Tibial artery (tissue), 4 donors: ENCODE measurements at regions of chr10 and their contacts with region 1.

Region 1: DNA sequence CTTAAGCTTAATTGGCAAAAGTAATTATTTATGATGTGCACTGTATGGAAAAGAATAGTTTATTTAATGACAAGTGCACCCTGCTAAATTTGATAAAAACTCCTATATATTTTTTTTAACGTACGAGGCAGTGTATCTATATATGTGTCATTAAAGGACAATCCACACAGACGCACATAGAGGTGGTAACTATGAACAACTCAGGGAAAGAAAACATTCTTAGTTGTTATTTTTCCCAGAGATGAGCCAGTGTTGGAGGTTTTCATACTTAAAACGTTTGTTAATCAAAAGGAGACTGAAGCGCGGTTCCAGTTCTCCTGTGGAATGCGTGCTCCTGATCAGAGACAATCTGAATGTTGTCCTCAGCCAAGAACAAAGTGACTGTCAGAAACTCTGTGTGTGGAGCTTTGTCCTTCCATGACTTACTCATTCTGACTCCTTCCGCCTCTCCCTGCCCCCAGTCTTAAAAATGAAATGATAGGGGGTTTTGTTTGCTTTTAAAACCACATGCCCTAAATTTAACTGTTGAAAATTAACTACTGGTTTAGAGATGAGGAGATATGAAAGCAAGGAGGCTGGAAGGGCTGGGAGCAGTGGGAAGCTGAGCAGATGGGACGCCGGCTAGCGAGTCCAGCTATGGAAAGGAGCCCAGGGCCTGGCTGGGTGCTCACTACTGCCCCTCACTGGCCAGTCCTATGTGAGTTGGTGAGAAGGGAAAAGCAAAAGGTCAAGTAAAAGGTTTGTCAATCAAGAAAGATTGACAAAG is 99.6 kb downstream of the SVIL start:
- DNase-seq: no peak
- H3K4me3 ChIP-seq: peak overlapping the region in 1 of 2 donors; percentile 12
- H3K27ac ChIP-seq: peak overlapping the region; percentile 56 to 68
- H3K4me1 ChIP-seq: peaks cover 5 to 49% (median 19%) of the 10 kb centered on the region in 4 donors
- H3K27me3 ChIP-seq: no peaks in the 10 kb centered on the region
- CTCF ChIP-seq: peak; percentile 49 to 51

Region 2: DNA sequence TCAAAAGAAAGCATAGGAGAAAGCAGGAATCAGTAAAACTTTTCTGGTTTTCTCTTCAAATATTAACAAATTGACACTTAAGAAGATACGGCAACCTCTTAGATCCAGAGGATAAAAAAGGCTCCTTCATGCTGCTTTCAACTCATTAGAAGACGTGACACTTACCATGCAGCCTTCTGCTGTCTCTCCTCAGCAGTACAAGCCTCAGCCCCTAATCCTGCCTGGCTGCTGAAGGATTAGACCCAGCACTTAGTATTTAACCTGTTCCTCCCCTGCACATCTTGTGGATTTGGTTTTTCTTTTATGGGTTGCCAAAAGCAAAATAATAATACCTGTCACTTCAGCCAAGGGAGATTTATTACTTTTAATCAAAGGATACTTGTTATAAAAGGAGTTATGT is 138.0 kb before region 1 on chr10:
- intact Hi-C with region 1: no loop called
- DNase-seq: no peak
- H3K4me3 ChIP-seq: no peak overlapping the region
- H3K27ac ChIP-seq: no peak overlapping the region
- H3K4me1 ChIP-seq: no peaks in the 10 kb centered on the region
- H3K27me3 ChIP-seq: peaks cover 0 to 7% of the 10 kb centered on the region in 2 donors
- CTCF ChIP-seq: no peak

Region 3: GRCh38 chr10:29585488-29585980 is 50.3 kb after region 1 on chr10:
- intact Hi-C with region 1: loop called (anchors 10 kb)
- DNase-seq: no peak
- H3K4me3 ChIP-seq: no peak overlapping the region
- H3K27ac ChIP-seq: peak overlapping the region; percentile 47 to 69
- H3K4me1 ChIP-seq: peaks cover 5 to 97% (median 46%) of the 10 kb centered on the region in 4 donors
- H3K27me3 ChIP-seq: no peaks in the 10 kb centered on the region
- CTCF ChIP-seq: no peak

Region 4: GRCh38 chr10:29735596-29736318 is 200.6 kb after region 1 on chr10:
- intact Hi-C with region 1: loop called (anchors 10 kb)
- DNase-seq: peak; percentile 84 to 95
- H3K4me3 ChIP-seq: peak overlapping the region; percentile 84 to 90
- H3K27ac ChIP-seq: peak overlapping the region; percentile 97
- H3K4me1 ChIP-seq: peaks cover 0 to 50% (median 30%) of the 10 kb centered on the region in 4 donors
- H3K27me3 ChIP-seq: no peaks in the 10 kb centered on the region
- CTCF ChIP-seq: peak; percentile 93 to 96